ENCODE measurements at regions of chr17 and their contacts with region 1.

Region 1: DNA sequence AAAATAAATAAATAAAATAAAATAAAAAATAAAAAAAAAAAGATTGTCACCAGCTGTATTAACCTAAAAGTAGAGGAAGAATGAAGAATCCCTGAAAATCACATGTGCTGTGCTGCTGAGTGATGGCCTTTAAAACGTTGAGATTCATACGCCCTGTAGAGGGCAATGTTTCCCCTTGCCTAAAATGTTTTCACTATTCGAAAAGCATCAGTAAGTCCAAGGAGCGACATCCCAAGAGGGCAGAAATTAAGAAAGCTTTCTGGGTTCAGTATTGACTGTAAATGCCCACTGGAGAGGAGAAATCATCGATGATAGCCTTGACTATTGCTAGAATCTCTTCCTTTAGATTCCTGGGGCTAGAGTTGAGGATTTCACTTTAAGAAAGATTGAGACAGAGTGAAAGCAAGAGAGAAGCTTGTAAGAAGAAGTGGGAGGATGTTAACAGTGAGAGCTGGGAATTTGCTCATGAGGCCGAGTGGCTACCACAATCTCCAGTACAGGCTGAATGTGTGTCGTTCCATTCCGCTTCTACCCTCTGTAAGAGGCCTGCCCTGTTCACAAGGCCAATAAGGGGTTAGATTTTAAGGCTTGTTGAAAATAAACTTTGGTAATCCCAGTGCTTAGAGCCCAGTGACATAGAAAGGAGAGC is 170.8 kb upstream of the FAM20A start:
- DNase-seq: peak in 1 of 2 donors; percentile 29
- ATAC-seq: peak; percentile 57 to 84 (median 76)
- H3K4me3 ChIP-seq: peak overlapping the region in 7 of 10 donors; percentile 16 to 40 (median 31)
- H3K27ac ChIP-seq: peak overlapping the region in 8 of 10 donors; percentile 2 to 83 (median 64)
- H3K4me1 ChIP-seq: peaks cover 0 to 29% (median 22%) of the 10 kb centered on the region in 9 donors
- H3K27me3 ChIP-seq: no peaks in the 10 kb centered on the region
- CTCF ChIP-seq: peak; percentile 41 to 71 (median 69)

Region 2: GRCh38 chr17:69047368-69048263 is 275.6 kb after region 1 on chr17:
- intact Hi-C with region 1: loop called in 1 of 10 experiments (anchors 10 kb)
- DNase-seq: peak; percentile 37 to 59
- ATAC-seq: peak; percentile 80 to 94 (median 89)
- H3K4me3 ChIP-seq: no peak overlapping the region
- H3K27ac ChIP-seq: peak overlapping the region; percentile 43 to 71 (median 64)
- H3K4me1 ChIP-seq: peaks cover 0 to 40% (median 9%) of the 10 kb centered on the region in 9 donors
- H3K27me3 ChIP-seq: no peaks in the 10 kb centered on the region
- CTCF ChIP-seq: no peak

Measured in heart right ventricle (tissue), 16 donors.